Activated CD4-positive, alpha-beta T cell treated with anti-CD3 and anti-CD28 coated beads for 36 hours (primary cell): ENCODE measurements at regions of chr20 and their contacts with region 1.

Region 1: GRCh38 chr20:38893565-38894090 is 32.6 kb upstream of the FAM83D start:
- DNase-seq: peak; percentile 89
- ATAC-seq: peak; percentile 71
- H3K4me3 Mint-ChIP-seq: peak overlapping the region; percentile 37
- H3K27ac Mint-ChIP-seq: peak overlapping the region; percentile 88
- H3K4me1 Mint-ChIP-seq: peaks cover 54% of the 10 kb centered on the region
- H3K27me3 Mint-ChIP-seq: no peaks in the 10 kb centered on the region

Region 2: GRCh38 chr20:38559764-38560163 is 333.9 kb before region 1 on chr20:
- CTCF ChIA-PET with region 1: no interaction called
- POLR2A ChIA-PET with region 1: no interaction called
- intact Hi-C with region 1: no loop called
- DNase-seq: no peak
- ATAC-seq: no peak
- H3K4me3 Mint-ChIP-seq: no peak overlapping the region
- H3K27ac Mint-ChIP-seq: no peak overlapping the region
- H3K4me1 Mint-ChIP-seq: no peaks in the 10 kb centered on the region
- H3K27me3 Mint-ChIP-seq: no peaks in the 10 kb centered on the region

Region 3: DNA sequence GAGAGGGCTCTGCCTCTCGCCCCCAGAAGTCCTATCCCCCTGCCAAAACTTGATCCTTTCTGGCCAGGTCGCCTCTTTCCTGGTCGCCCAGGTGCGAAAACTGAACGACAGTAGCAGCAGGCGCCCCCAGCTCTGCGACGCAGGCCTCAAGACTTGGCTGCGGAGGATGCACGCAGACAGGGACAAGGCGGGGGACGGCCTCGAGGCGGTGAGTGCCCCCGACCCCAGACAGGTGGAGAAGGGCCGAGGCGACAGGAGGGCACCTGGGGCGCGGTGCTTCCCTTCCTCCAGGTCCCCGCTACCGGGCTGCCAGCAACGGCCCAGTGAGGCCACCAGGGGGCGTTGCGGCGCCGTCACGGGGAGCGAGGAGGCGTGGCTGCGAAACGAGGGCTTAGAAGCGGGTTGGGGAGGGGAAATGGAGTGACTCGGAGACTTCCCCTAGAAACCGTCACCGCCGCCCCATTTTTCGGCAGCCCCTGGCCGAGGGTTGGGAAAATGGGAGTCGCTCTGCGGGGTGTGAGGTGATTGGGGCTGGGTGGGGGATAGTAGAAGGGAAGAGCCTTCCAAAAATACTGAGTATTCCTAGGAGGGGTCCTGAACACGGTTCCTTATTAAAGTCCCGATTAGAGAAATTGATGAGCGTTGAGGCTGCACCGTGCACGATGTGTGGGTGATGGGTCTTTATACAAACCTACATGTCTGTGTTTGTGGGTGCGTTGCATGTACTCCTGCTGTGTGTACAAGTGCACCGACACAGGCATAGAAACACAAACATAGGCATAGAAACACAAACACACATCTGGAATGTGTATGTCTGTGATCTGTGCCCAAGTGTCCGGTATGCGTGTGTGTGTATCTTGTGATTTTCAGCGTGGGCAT is 247.4 kb before region 1 on chr20:
- CTCF ChIA-PET with region 1: interaction called, 3 read pairs
- POLR2A ChIA-PET with region 1: no interaction called
- intact Hi-C with region 1: loop called (anchors 1 to 5 kb)
- DNase-seq: peak; percentile 93
- ATAC-seq: peak; percentile 98
- H3K4me3 Mint-ChIP-seq: peak overlapping the region; percentile 44
- H3K27ac Mint-ChIP-seq: peak overlapping the region; percentile 41
- H3K4me1 Mint-ChIP-seq: peaks cover 7% of the 10 kb centered on the region
- H3K27me3 Mint-ChIP-seq: peaks cover 30% of the 10 kb centered on the region

Region 4: GRCh38 chr20:38757145-38757775 is 136.4 kb before region 1 on chr20:
- CTCF ChIA-PET with region 1: interaction called, 14 read pairs
- POLR2A ChIA-PET with region 1: no interaction called
- intact Hi-C with region 1: no loop called
- DNase-seq: no peak
- ATAC-seq: no peak
- H3K4me3 Mint-ChIP-seq: no peak overlapping the region
- H3K27ac Mint-ChIP-seq: no peak overlapping the region
- H3K4me1 Mint-ChIP-seq: no peaks in the 10 kb centered on the region
- H3K27me3 Mint-ChIP-seq: no peaks in the 10 kb centered on the region

Region 5: GRCh38 chr20:38805502-38805957 is 88.1 kb before region 1 on chr20 and contains the start of gene PPP1R16B:
- CTCF ChIA-PET with region 1: interaction called, 51 read pairs
- POLR2A ChIA-PET with region 1: interaction called, 3 read pairs
- intact Hi-C with region 1: loop called (anchors 1 kb)
- DNase-seq: peak; percentile 86
- ATAC-seq: peak; percentile 79
- H3K4me3 Mint-ChIP-seq: peak within 1 kb of the TSS; percentile 86
- H3K27ac Mint-ChIP-seq: peak within 1 kb of the TSS; percentile 93
- H3K4me1 Mint-ChIP-seq: peaks cover 46% of the 10 kb centered on the region
- H3K27me3 Mint-ChIP-seq: no peaks in the 10 kb centered on the region
- total RNA-seq, gene PPP1R16B: 78.8 to 84.0 TPM

Region 6: GRCh38 chr20:38842558-38842981 is 51.1 kb before region 1 on chr20:
- CTCF ChIA-PET with region 1: interaction called, 4 read pairs
- POLR2A ChIA-PET with region 1: no interaction called
- intact Hi-C with region 1: loop called in 1 of 2 experiments (anchors 2 kb)
- DNase-seq: peak; percentile 87
- ATAC-seq: peak; percentile 66
- H3K4me3 Mint-ChIP-seq: peak overlapping the region; percentile 71
- H3K27ac Mint-ChIP-seq: peak overlapping the region; percentile 97
- H3K4me1 Mint-ChIP-seq: peaks cover 87% of the 10 kb centered on the region
- H3K27me3 Mint-ChIP-seq: no peaks in the 10 kb centered on the region